Activated CD4-positive, alpha-beta T cell treated with anti-CD3 and anti-CD28 coated beads, Interleukin-2, amount 10 ng/mL, durations not matched to agents 24 days and 14 days (primary cell): ENCODE measurements at regions of chr11 and their contacts with region 1.

Region 1: DNA sequence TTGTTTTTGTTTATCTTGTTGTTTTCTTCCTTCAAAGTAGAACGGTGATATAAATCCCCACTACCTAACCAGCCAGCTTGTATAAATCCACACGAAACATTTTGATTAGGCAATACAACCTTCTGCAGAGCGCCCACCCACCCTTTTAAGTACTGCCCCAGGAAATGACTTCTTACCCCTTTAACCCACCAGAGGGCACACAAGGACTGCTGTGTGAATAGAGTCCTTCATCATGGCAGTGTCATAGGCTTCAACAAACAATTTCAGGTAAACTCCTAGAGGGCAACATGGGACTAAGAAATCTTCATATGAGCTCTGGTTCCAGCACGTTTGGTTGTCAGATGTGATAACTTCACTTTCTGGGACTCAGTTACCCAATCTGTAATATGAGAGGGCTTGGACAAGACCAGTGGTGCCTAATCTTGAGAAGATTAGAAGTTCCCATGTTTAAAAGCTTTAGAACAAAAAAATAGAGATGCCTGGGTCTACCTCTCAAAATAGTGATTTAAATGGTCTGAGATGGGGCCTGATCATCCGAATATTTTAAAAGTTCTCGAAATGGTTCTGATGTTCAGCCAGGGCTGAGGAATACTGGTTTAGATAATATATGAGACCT is 56.1 kb downstream of the PIWIL4 start:
- DNase-seq: peak; percentile 86
- H3K4me3 Mint-ChIP-seq: no peak overlapping the region
- H3K27ac Mint-ChIP-seq: no peak overlapping the region
- H3K4me1 Mint-ChIP-seq: no peaks in the 10 kb centered on the region
- H3K27me3 Mint-ChIP-seq: peaks cover 3% of the 10 kb centered on the region

Region 2: DNA sequence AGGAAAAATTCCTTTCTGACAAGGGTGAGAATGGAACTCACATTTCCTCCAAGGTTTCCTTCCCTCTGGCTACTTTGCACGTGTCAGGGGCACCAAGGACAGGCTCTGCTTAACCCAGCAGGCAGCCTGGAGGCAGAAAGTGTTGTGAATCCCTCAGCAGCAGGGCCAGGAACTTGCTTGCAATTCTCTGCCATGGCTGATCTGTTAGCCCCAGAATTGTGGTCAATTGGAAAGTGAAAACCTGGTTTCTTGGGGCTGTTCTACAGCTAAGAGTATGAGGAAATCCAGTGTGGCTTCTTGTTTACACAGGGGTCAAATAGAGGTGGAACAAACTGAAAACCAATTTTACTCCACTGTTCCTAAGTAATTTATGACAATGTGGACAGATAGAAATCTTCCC is 1000.0 kb before region 1 on chr11:
- intact Hi-C with region 1: no loop called
- DNase-seq: no peak
- H3K4me3 Mint-ChIP-seq: no peak overlapping the region
- H3K27ac Mint-ChIP-seq: no peak overlapping the region
- H3K4me1 Mint-ChIP-seq: no peaks in the 10 kb centered on the region
- H3K27me3 Mint-ChIP-seq: peaks cover 4% of the 10 kb centered on the region

Region 3: DNA sequence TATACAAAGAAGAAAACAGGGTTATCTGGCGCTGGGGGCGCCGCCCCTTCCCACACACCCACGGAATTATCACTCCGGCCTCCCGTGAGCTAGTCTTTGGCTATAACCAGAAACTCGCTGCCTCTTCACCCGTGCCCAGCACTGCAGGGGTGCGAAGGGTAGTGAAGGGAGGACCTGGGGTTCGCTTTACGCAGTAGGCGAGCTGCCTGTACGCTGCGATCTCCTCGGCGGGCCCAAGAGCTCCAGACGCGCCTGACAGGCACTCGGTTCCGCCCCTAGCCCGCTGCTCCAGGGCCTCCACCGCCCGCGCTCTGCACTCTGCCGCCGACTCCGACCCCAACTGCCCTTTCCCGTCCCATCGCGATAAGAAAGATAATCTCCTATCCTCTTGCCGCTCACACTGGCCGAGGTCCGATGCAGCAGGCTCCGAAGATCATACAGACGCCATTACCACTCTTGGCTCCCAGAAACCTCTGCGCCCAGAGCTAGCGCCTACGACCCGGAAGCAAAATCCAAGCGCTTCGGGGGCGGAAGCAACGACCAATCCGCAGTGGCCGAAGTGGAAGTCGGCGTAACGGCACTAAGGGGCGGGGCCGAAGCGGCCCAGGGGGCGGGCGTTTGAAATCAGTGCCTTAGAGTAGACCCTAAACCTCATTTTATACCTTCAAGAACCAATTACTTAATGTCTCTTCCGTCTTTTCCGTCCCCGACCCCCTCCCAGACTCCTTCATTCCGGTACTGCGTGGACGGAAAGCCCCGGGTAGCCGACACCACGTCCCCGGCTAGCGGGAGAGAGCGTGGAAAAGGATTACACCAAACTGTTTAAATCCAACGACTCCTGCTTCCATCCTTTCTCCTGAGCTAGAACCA is 350.1 kb after region 1 on chr11 and contains the starts of genes CWC15 and KDM4D:
- intact Hi-C with region 1: loop called (anchors 10 kb)
- DNase-seq: peak; percentile 98
- H3K4me3 Mint-ChIP-seq: peak within 1 kb of the TSS; percentile 94
- H3K27ac Mint-ChIP-seq: peak within 1 kb of the TSS; percentile 93
- H3K4me1 Mint-ChIP-seq: peaks cover 33% of the 10 kb centered on the region
- H3K27me3 Mint-ChIP-seq: no peaks in the 10 kb centered on the region
- total RNA-seq, gene CWC15: 87.6 and 96.2 TPM in 2 replicates
- total RNA-seq, gene KDM4D: 1.2 TPM in 2 replicates

Region 4: GRCh38 chr11:95028357-95028756 is 405.1 kb after region 1 on chr11:
- intact Hi-C with region 1: no loop called
- DNase-seq: peak; percentile 25
- H3K4me3 Mint-ChIP-seq: no peak overlapping the region
- H3K27ac Mint-ChIP-seq: no peak overlapping the region
- H3K4me1 Mint-ChIP-seq: no peaks in the 10 kb centered on the region
- H3K27me3 Mint-ChIP-seq: peaks cover 5% of the 10 kb centered on the region